Activated B cell treated with CpG ODN at 0.5 μM for 24 hours (primary cell): ENCODE measurements at regions of chr2 and their contacts with region 1.

Region 1: GRCh38 chr2:44167940-44168680 is 565 bp upstream of the PPM1B start:
- DNase-seq: peak; percentile 82
- ATAC-seq: peak; percentile 79
- H3K4me3 Mint-ChIP-seq: peak overlapping the region; percentile 99
- H3K27ac Mint-ChIP-seq: peak overlapping the region; percentile 100
- H3K4me1 Mint-ChIP-seq: peaks cover 41% of the 10 kb centered on the region
- H3K27me3 Mint-ChIP-seq: no peaks in the 10 kb centered on the region
- CTCF ChIP-seq: no peak

Region 2: DNA sequence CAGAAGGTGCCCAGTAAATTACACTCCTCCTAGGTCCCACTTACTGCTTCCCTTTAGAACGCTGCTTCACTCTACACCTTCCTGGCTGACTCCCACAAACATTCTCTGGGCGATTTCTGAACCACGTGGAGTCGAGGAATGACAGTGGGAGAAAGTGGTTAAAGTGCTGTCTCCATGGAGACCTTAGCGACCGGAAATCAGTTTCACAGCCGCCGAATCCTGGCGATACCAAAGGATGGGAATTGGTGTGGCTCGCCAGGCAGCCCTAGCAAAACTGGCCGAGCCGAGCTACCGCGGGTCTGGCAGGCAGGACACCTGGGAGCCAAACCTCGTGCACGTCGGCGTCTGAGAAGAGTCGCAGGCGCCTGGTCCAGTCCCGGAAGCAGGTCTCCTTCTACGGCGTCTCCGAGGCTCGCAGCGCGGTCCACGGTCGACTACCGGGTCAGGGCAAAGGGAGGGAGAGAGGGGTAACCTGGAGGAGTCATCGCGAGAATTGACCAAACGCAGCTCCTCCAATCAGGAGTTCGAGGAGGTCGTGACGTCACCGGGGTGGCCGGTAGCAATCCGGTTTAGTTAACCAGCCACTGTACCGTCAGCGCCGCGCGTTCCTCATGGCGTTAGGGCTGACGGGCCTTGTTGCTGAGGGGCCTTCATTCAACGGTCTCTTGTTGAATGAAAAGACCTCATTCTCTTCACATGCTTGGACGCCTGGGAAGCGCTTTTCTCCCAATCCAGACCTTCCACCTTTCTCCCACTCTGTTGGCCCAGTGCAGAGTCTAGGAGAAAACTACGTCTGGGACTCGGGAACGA is 572.3 kb before region 1 on chr2 and contains the start of gene THADA:
- CTCF ChIA-PET with region 1: no interaction called
- POLR2A ChIA-PET with region 1: interaction called, 6 read pairs
- intact Hi-C with region 1: loop called (anchors 5 kb)
- DNase-seq: peak; percentile 86
- ATAC-seq: peak; percentile 98
- H3K4me3 Mint-ChIP-seq: peak within 1 kb of the TSS; percentile 97
- H3K27ac Mint-ChIP-seq: peak within 1 kb of the TSS; percentile 95
- H3K4me1 Mint-ChIP-seq: peaks cover 27% of the 10 kb centered on the region
- H3K27me3 Mint-ChIP-seq: no peaks in the 10 kb centered on the region
- CTCF ChIP-seq: no peak
- total RNA-seq, gene THADA: 43.2 and 51.4 TPM in 2 replicates

Region 3: GRCh38 chr2:44087036-44087713 is 80.9 kb before region 1 on chr2:
- CTCF ChIA-PET with region 1: no interaction called
- POLR2A ChIA-PET with region 1: interaction called, 6 read pairs
- intact Hi-C with region 1: loop called (anchors 1 kb)
- DNase-seq: peak; percentile 74
- ATAC-seq: peak; percentile 86
- H3K4me3 Mint-ChIP-seq: peak overlapping the region; percentile 83
- H3K27ac Mint-ChIP-seq: peak overlapping the region; percentile 3
- H3K4me1 Mint-ChIP-seq: peaks cover 27% of the 10 kb centered on the region
- H3K27me3 Mint-ChIP-seq: no peaks in the 10 kb centered on the region
- CTCF ChIP-seq: peak; percentile 27

Region 4: GRCh38 chr2:44361330-44362206 is 193.5 kb after region 1 on chr2 and contains the starts of genes CAMKMT and PREPL:
- CTCF ChIA-PET with region 1: no interaction called
- POLR2A ChIA-PET with region 1: interaction called, 59 read pairs
- intact Hi-C with region 1: loop called (anchors 1 kb)
- DNase-seq: peak; percentile 96
- ATAC-seq: peak; percentile 83
- H3K4me3 Mint-ChIP-seq: peak within 1 kb of the TSS; percentile 93
- H3K27ac Mint-ChIP-seq: peak within 1 kb of the TSS; percentile 100
- H3K4me1 Mint-ChIP-seq: peaks cover 35% of the 10 kb centered on the region
- H3K27me3 Mint-ChIP-seq: no peaks in the 10 kb centered on the region
- CTCF ChIP-seq: no peak
- total RNA-seq, gene CAMKMT: 17.4 and 21.2 TPM in 2 replicates
- total RNA-seq, gene PREPL: 29.2 and 33.3 TPM in 2 replicates

Region 5: GRCh38 chr2:45567974-45568789 is 1400.1 kb after region 1 on chr2:
- CTCF ChIA-PET with region 1: no interaction called
- POLR2A ChIA-PET with region 1: no interaction called
- intact Hi-C with region 1: loop called (anchors 1 kb)
- DNase-seq: no peak
- ATAC-seq: peak; percentile 99
- H3K4me3 Mint-ChIP-seq: peak overlapping the region; percentile 80
- H3K27ac Mint-ChIP-seq: peak overlapping the region; percentile 93
- H3K4me1 Mint-ChIP-seq: peaks cover 9% of the 10 kb centered on the region
- H3K27me3 Mint-ChIP-seq: no peaks in the 10 kb centered on the region
- CTCF ChIP-seq: no peak